HepG2 (cell line): ENCODE measurements at regions of chr2 and their contacts with region 1.

Region 1: GRCh38 chr2:203238704-203239526 is at the start of gene CYP20A1:
- DNase-seq: peak; percentile 93
- ATAC-seq: peak; percentile 94
- H3K4me3 ChIP-seq: peak within 1 kb of the TSS; percentile 78 to 83 (median 79)
- H3K27ac ChIP-seq: peak within 1 kb of the TSS; percentile 94
- H3K4me1 ChIP-seq: peaks cover 31% of the 10 kb centered on the region
- H3K27me3 ChIP-seq: no peaks in the 10 kb centered on the region
- CTCF ChIP-seq: peak; percentile 75
- EP300 ChIP-seq: peak; percentile 38 to 40; a peak in 2 of 4 replicates
- POLR2A ChIP-seq: peak; percentile 99
- RAD21 ChIP-seq: peak; percentile 52
- total RNA-seq, gene CYP20A1: 32.8 and 35.3 TPM in 2 replicates

Region 2: DNA sequence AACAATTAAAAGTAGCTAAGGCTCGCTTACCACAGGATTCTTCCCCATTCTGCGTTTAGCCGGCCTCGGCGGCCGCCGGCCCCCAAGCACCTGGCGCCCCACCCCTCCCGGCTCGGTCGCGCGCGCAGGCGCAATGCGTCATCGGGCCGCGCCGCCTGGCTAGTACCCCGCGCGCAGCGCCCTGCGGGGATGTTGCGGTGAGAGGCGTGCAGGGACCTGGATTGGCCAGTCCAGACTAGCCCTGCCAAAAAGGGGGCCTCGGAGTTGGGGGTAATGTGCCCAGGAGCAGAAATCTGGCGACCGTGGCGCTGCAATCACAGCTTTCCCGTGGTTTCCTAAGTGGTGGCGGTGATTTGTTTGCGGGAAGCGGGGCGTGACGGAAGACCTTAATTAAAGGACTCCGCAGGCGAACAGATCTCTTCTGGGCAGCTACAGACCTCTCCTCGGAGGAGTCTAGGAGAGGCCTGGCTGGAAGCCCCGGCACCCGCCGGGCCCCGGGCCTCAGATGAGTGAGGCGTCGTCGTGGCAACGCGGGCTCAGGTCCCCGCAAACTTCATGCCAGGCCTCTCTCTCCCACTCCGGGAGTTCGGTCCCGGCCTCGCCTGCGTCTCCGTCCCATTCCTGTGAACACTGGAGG is 1596.2 kb before region 1 on chr2:
- CTCF ChIA-PET with region 1: no interaction called
- POLR2A ChIA-PET with region 1: no interaction called
- in situ Hi-C with region 1: no loop called
- intact Hi-C with region 1: loop called (anchors 5 kb)
- DNase-seq: peak; percentile 68
- ATAC-seq: peak; percentile 96
- H3K4me3 ChIP-seq: peak overlapping the region; percentile 82 to 98 (median 85)
- H3K27ac ChIP-seq: peak overlapping the region; percentile 68
- H3K4me1 ChIP-seq: peaks cover 18% of the 10 kb centered on the region
- H3K27me3 ChIP-seq: peaks cover 0 to 1% of the 10 kb centered on the region in 2 experiments; a peak in 1 of 5 replicates
- CTCF ChIP-seq: peak; percentile 19; the same call in 1 of the 2 replicates
- EP300 ChIP-seq: 0 out of 4 replicates have a peak, but pooled peaks of 1 of the 2 experiments have one; percentile 8
- POLR2A ChIP-seq: peak; percentile 88 to 90
- RAD21 ChIP-seq: peak; percentile 39

Region 3: DNA sequence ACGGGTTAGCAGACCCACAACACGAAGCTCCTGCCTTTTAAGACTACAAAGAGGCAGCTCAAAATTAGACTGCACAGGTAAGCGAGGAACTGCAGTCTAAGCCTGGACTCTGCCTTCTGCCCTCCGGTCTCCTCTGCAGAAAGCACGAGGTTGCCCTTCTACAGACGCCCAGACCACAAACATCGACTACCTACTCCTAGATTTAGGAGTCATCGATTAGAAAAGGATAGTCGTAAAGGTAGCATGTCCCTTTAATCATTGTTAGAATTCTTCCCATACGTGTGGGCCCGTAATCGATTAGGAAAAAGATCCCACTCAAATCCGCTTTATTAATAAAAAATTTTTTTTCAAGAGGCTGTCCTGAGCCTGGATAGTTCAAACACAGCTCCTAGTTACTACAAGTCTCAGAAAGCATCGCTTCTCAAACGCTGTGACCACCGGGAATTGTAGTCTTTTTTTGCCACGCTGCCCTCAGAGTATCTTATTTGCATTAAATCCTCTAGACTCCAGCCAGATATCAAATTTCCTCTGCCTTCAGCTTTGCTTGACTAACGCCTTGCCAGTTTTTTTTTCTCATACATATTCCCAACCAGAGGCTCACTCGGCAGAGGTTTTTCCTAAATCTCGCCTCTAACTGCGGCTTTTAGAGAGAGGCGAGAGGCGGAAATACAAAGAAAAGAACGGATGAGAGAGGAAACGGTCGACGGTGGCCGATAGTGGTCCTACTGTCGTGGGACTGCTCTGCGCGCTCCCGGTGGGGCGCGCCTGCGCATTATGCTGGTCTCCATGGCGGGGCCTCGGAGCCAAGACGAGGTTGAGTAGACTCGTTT is 327.2 kb before region 1 on chr2 and contains the starts of genes CARF and WDR12:
- CTCF ChIA-PET with region 1: no interaction called
- POLR2A ChIA-PET with region 1: interaction called, 5 read pairs
- in situ Hi-C with region 1: no loop called
- intact Hi-C with region 1: loop called (anchors 2 kb)
- DNase-seq: peak; percentile 94
- ATAC-seq: peak; percentile 92
- H3K4me3 ChIP-seq: peak within 1 kb of the TSS; percentile 88 to 96 (median 91)
- H3K27ac ChIP-seq: peak within 1 kb of the TSS; percentile 95
- H3K4me1 ChIP-seq: peaks cover 26% of the 10 kb centered on the region
- H3K27me3 ChIP-seq: peaks cover 0 to 4% of the 10 kb centered on the region in 2 experiments; a peak in 2 of 5 replicates
- CTCF ChIP-seq: no peak
- EP300 ChIP-seq: no peak
- POLR2A ChIP-seq: peak; percentile 99
- RAD21 ChIP-seq: no peak; the same call in 1 of the 2 replicates
- total RNA-seq, gene CARF: 3.0 and 3.7 TPM in 2 replicates
- total RNA-seq, gene WDR12: 216 and 330 TPM in 2 replicates

Region 4: GRCh38 chr2:203225423-203226039 is 13.4 kb before region 1 on chr2:
- CTCF ChIA-PET with region 1: interaction called, 6 read pairs
- POLR2A ChIA-PET with region 1: interaction called, 25 read pairs
- in situ Hi-C with region 1: no loop called
- intact Hi-C with region 1: loop called (anchors 1 kb)
- DNase-seq: peak; percentile 35
- ATAC-seq: peak; percentile 90
- H3K4me3 ChIP-seq: no peak overlapping the region
- H3K27ac ChIP-seq: no peak overlapping the region
- H3K4me1 ChIP-seq: peaks cover 27% of the 10 kb centered on the region
- H3K27me3 ChIP-seq: no peaks in the 10 kb centered on the region
- CTCF ChIP-seq: peak; percentile 75
- EP300 ChIP-seq: no peak
- POLR2A ChIP-seq: no peak
- RAD21 ChIP-seq: peak; percentile 70

Region 5: GRCh38 chr2:203261326-203262159 is 22.6 kb after region 1 on chr2:
- CTCF ChIA-PET with region 1: no interaction called
- POLR2A ChIA-PET with region 1: interaction called, 10 read pairs
- in situ Hi-C with region 1: no loop called
- intact Hi-C with region 1: no loop called
- DNase-seq: peak; percentile 24
- ATAC-seq: peak; percentile 84
- H3K4me3 ChIP-seq: no peak overlapping the region
- H3K27ac ChIP-seq: peak overlapping the region; percentile 11
- H3K4me1 ChIP-seq: peaks cover 10% of the 10 kb centered on the region
- H3K27me3 ChIP-seq: no peaks in the 10 kb centered on the region
- CTCF ChIP-seq: peak; percentile 47; the same call in 1 of the 2 replicates
- EP300 ChIP-seq: no peak
- POLR2A ChIP-seq: no peak
- RAD21 ChIP-seq: no peak

Region 6: GRCh38 chr2:203327901-203328759 is 89.2 kb after region 1 on chr2 and contains the start of gene ABI2:
- CTCF ChIA-PET with region 1: no interaction called
- POLR2A ChIA-PET with region 1: interaction called, 8 read pairs
- in situ Hi-C with region 1: no loop called
- intact Hi-C with region 1: loop called (anchors 2 kb)
- DNase-seq: peak; percentile 84
- ATAC-seq: peak; percentile 92
- H3K4me3 ChIP-seq: peak within 1 kb of the TSS; percentile 97 to 100 (median 97)
- H3K27ac ChIP-seq: peak within 1 kb of the TSS; percentile 83
- H3K4me1 ChIP-seq: peaks cover 34% of the 10 kb centered on the region
- H3K27me3 ChIP-seq: peaks cover 0 to 2% of the 10 kb centered on the region in 2 experiments; a peak in 1 of 5 replicates
- CTCF ChIP-seq: no peak
- EP300 ChIP-seq: peak in 1 of 2 experiments; percentile 72; a peak in 2 of 4 replicates
- POLR2A ChIP-seq: peak; percentile 25 to 80; a peak in 3 of 4 replicates
- RAD21 ChIP-seq: peak; percentile 60
- total RNA-seq, gene ABI2: 25.6 and 28.4 TPM in 2 replicates

Region 7: DNA sequence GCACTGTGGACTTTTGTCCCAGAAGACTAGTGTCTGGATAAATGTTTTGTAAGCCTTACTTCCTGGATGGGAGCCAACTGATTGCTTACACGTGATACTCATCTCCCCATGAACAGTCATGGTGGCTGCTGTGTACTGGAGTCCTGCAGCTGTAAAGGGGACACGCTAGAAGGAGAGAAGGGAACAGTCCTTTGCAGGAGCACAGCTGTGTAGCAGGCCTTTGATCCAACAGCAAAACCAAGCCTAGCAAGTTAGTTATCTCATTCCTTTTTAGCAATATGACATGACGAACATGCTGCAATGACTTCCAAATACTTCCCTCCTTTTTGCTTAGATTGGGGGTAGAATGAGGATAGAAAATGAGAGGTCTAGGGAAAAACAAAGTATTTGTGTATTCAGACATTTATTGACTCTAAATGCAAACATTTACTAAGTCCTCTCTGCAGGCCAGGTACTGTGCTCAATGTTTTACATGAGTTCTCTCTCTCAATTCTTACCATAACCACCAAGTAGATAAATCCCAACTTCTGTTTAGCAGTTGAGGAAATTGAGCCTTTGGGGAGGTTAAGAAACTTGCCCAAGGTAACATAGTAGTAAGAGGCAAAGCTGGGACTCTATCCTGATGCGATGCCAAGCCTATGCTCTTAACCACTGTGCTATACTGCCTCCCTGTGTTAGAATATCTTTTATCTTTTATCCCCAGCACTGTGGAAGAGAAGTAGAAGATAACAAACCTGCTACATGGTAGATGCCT is 412.1 kb after region 1 on chr2:
- CTCF ChIA-PET with region 1: no interaction called
- POLR2A ChIA-PET with region 1: interaction called, 9 read pairs
- in situ Hi-C with region 1: loop called (anchors 25 kb)
- intact Hi-C with region 1: no loop called
- DNase-seq: peak; percentile 98
- ATAC-seq: peak; percentile 89
- H3K4me3 ChIP-seq: peak overlapping the region; percentile 24 to 59 (median 35); a peak in 5 of 6 replicates
- H3K27ac ChIP-seq: peak overlapping the region; percentile 91
- H3K4me1 ChIP-seq: peaks cover 73% of the 10 kb centered on the region
- H3K27me3 ChIP-seq: no peaks in the 10 kb centered on the region
- CTCF ChIP-seq: peak; percentile 78
- EP300 ChIP-seq: peak in 1 of 2 experiments; percentile 90; a peak in 2 of 4 replicates
- POLR2A ChIP-seq: peak in 1 of 2 experiments; percentile 62; a peak in 2 of 4 replicates
- RAD21 ChIP-seq: peak; percentile 59; the same call in 1 of the 2 replicates